Mucosa of descending colon (tissue), 3 donors: ENCODE measurements at regions of chr9 and their contacts with region 1.

Region 1: GRCh38 chr9:19161257-19162025 is 34.1 kb upstream of the PLIN2 start:
- DNase-seq: peak in 1 of 3 donors; percentile 66
- ATAC-seq: peak; percentile 98
- H3K4me3 ChIP-seq: no peak overlapping the region
- H3K4me1 ChIP-seq: peaks cover 12% of the 10 kb centered on the region
- CTCF ChIP-seq: no peak

Region 2: GRCh38 chr9:19116107-19116790 is 45.2 kb before region 1 on chr9:
- intact Hi-C with region 1: loop called in 1 of 2 experiments (anchors 10 kb)
- DNase-seq: no peak
- ATAC-seq: no peak
- H3K4me3 ChIP-seq: no peak overlapping the region
- H3K4me1 ChIP-seq: no peaks in the 10 kb centered on the region
- CTCF ChIP-seq: no peak